K562 (cell line): ENCODE measurements at regions of chr9 and their contacts with region 1.

Region 1: GRCh38 chr9:112180387-112180881 is 5.3 kb upstream of the SUSD1 start:
- DNase-seq: peak; percentile 72 to 92 (median 80)
- ATAC-seq: peak; percentile 74
- H3K4me3 ChIP-seq: no peak overlapping the region
- H3K27ac ChIP-seq: peak overlapping the region; percentile 83
- H3K4me1 ChIP-seq: peaks cover 31 to 51% of the 10 kb centered on the region in 2 experiments
- H3K27me3 ChIP-seq: no peaks in the 10 kb centered on the region
- CTCF ChIP-seq: no peak
- EP300 ChIP-seq: peak; percentile 81
- POLR2A ChIP-seq: no peak
- RAD21 ChIP-seq: 0 out of 4 replicates have a peak, but pooled peaks of 1 of the 2 experiments have one; percentile 12

Region 2: GRCh38 chr9:111992523-111992922 is 187.9 kb before region 1 on chr9:
- CTCF ChIA-PET with region 1: no interaction called
- POLR2A ChIA-PET with region 1: no interaction called
- in situ Hi-C with region 1: no loop called
- intact Hi-C with region 1: no loop called
- DNase-seq: no peak
- ATAC-seq: peak; percentile 63
- H3K4me3 ChIP-seq: no peak overlapping the region
- H3K27ac ChIP-seq: no peak overlapping the region
- H3K4me1 ChIP-seq: peaks cover 0 to 5% of the 10 kb centered on the region in 2 experiments; a peak in 1 of 5 replicates
- H3K27me3 ChIP-seq: no peaks in the 10 kb centered on the region
- CTCF ChIP-seq: no peak
- EP300 ChIP-seq: no peak
- POLR2A ChIP-seq: no peak
- RAD21 ChIP-seq: no peak

Region 3: GRCh38 chr9:112166172-112167140 is 14.0 kb before region 1 on chr9:
- CTCF ChIA-PET with region 1: no interaction called
- POLR2A ChIA-PET with region 1: interaction called, 34 read pairs
- in situ Hi-C with region 1: no loop called
- intact Hi-C with region 1: no loop called
- DNase-seq: peak in 2 of 4 experiments; percentile 39 to 60
- ATAC-seq: peak; percentile 78
- H3K4me3 ChIP-seq: no peak overlapping the region
- H3K27ac ChIP-seq: peak overlapping the region; percentile 39; the same call in 1 of the 3 replicates
- H3K4me1 ChIP-seq: peaks cover 3 to 32% of the 10 kb centered on the region in 2 experiments
- H3K27me3 ChIP-seq: no peaks in the 10 kb centered on the region
- CTCF ChIP-seq: peak; percentile 49 to 67 (median 50); a peak in 5 of 6 replicates
- EP300 ChIP-seq: no peak
- POLR2A ChIP-seq: no peak
- RAD21 ChIP-seq: peak; percentile 38 to 61; a peak in 3 of 4 replicates

Region 4: DNA sequence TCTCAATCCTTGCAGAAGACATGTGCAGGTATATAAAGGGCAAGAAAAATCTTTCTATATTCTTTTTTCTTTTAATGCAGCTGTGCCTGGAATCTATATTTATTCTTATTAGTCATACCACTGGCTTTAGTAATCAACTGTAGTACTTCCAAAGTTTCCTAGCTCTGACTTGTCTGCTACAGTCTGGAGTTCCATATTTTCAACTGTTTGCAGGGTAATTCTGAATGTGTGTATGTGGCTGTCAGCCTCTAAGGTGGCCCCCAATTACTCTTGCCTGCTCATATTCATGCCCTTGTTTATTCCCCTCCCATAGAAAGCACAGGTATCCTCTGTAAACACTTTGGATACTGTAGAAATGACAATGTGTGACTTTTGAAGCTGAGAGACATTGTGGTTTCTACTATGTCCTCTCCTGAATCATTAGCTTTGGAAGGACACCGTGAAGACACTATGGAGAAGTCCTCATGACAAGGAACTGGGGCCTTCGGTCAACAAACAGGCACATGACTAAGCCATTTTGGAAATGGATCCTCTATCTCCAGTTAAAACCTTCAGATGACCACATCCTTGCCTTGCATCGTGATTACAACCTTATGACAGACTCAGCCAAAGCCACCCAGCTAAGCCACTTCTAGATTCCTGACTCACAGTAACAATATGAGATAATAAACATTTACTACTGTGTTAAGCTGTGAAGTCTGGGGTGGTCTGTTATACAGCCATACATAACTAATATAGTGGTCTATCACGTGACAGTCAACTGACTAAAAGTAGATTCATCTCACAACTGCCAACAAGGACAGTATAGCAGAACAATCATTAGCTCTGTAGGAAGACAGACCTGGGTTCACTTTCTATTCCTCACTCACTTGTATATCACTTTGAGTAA is 44.2 kb after region 1 on chr9:
- CTCF ChIA-PET with region 1: no interaction called
- POLR2A ChIA-PET with region 1: no interaction called
- in situ Hi-C with region 1: no loop called
- intact Hi-C with region 1: loop called (anchors 2 kb)
- DNase-seq: peak in 2 of 4 experiments; percentile 65 to 86
- ATAC-seq: peak; percentile 93
- H3K4me3 ChIP-seq: no peak overlapping the region
- H3K27ac ChIP-seq: peak overlapping the region; percentile 91
- H3K4me1 ChIP-seq: peaks cover 0 to 18% of the 10 kb centered on the region in 2 experiments; a peak in 3 of 5 replicates
- H3K27me3 ChIP-seq: no peaks in the 10 kb centered on the region
- CTCF ChIP-seq: no peak
- EP300 ChIP-seq: peak; percentile 82
- POLR2A ChIP-seq: no peak
- RAD21 ChIP-seq: peak in 1 of 2 experiments; percentile 39; a peak in 1 of 4 replicates

Region 5: DNA sequence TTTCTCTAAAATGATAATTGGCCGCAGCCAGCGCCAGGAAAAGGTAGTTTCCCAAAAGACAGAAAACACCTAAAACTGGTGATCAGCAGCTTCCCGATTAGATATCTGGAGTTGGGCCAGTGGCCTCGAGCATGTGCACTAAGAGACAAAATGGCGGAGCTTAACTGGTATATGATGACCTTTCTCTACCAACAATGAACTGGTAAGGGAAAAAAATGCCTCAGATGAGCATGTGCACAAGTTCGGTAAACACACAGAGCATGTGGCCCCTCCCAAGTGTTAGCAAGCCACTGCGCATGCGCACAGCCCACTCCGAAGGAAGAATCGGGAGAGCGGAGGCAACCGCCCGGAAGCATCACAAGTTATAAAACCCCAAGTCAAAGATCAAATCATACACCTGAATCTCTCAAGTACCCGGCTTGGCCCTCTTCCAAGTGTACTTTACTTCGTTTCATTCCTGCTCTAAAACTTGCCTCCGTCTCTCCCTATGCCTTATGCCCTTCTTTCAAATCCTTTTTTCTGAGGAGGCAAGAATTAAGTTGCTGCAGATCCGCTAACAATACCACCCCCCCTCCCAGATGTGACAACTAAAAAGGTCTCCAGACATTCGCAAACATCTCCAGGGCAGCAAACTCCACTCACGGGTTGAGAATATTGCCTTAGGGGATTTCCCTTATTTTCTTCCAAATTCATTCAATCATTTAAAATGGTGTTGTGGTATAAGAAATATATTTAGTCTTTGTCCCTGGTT is 168.0 kb after region 1 on chr9:
- CTCF ChIA-PET with region 1: no interaction called
- POLR2A ChIA-PET with region 1: no interaction called
- in situ Hi-C with region 1: no loop called
- intact Hi-C with region 1: no loop called
- DNase-seq: no peak
- ATAC-seq: no peak
- H3K4me3 ChIP-seq: no peak overlapping the region
- H3K27ac ChIP-seq: no peak overlapping the region
- H3K4me1 ChIP-seq: no peaks in the 10 kb centered on the region
- H3K27me3 ChIP-seq: no peaks in the 10 kb centered on the region
- CTCF ChIP-seq: no peak
- EP300 ChIP-seq: no peak
- POLR2A ChIP-seq: no peak
- RAD21 ChIP-seq: no peak